ENCODE measurements at regions of chr1 and their contacts with region 1.

Region 1: GRCh38 chr1:226882631-226883409 is 12.4 kb downstream of the PSEN2 start:
- DNase-seq: no peak
- H3K4me3 ChIP-seq: no peak overlapping the region
- H3K27ac ChIP-seq: no peak overlapping the region
- H3K4me1 ChIP-seq: no peaks in the 10 kb centered on the region
- H3K27me3 ChIP-seq: no peaks in the 10 kb centered on the region
- CTCF ChIP-seq: no peak

Region 2: GRCh38 chr1:226634166-226634588 is 248.6 kb before region 1 on chr1:
- dilution Hi-C with region 1: loop called (anchors 10 kb)
- DNase-seq: no peak
- H3K4me3 ChIP-seq: no peak overlapping the region
- H3K27ac ChIP-seq: no peak overlapping the region
- H3K4me1 ChIP-seq: peaks cover 18% of the 10 kb centered on the region
- H3K27me3 ChIP-seq: no peaks in the 10 kb centered on the region
- CTCF ChIP-seq: peak; percentile 82 to 96 (median 93)